IMR-90 (cell line): ENCODE measurements at regions of chr1 and their contacts with region 1.

Region 1: GRCh38 chr1:160315359-160315758 is 27.7 kb downstream of the COPA start:
- DNase-seq: no peak
- ATAC-seq: peak; percentile 24; the same call in 1 of the 2 replicates
- H3K4me3 ChIP-seq: no peak overlapping the region
- H3K27ac ChIP-seq: peak overlapping the region; percentile 7; the same call in 1 of the 2 replicates
- H3K4me1 ChIP-seq: peaks cover 5% of the 10 kb centered on the region; the same call in 1 of the 2 replicates
- H3K27me3 ChIP-seq: no peaks in the 10 kb centered on the region
- CTCF ChIP-seq: no peak
- POLR2A ChIP-seq: no peak
- RAD21 ChIP-seq: no peak

Region 2: DNA sequence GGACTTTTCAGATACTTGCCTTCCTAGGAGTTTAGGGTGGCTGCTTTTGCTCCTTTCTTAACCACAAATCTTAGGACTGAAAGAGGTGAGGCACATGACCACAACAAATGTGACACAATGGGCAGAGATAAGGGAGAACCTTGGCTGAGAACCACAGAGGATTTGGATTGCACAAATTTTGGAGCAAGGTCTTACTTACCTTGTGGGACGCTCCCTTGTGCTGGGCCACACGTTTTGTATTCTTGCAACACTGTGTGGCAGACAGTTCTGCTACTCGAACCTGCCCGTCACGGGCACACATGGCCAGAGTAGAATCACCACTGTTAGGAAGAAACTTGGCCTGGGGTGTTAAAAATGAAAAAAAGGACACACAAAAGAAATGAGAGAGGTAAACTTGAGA is 77.0 kb before region 1 on chr1:
- CTCF ChIA-PET with region 1: no interaction called
- POLR2A ChIA-PET with region 1: no interaction called
- dilution Hi-C with region 1: no loop called
- in situ Hi-C with region 1: no loop called
- intact Hi-C with region 1: loop called (anchors 5 kb)
- DNase-seq: no peak
- ATAC-seq: no peak
- H3K4me3 ChIP-seq: no peak overlapping the region
- H3K27ac ChIP-seq: no peak overlapping the region
- H3K4me1 ChIP-seq: no peaks in the 10 kb centered on the region
- H3K27me3 ChIP-seq: no peaks in the 10 kb centered on the region
- CTCF ChIP-seq: no peak
- POLR2A ChIP-seq: no peak
- RAD21 ChIP-seq: no peak

Region 3: DNA sequence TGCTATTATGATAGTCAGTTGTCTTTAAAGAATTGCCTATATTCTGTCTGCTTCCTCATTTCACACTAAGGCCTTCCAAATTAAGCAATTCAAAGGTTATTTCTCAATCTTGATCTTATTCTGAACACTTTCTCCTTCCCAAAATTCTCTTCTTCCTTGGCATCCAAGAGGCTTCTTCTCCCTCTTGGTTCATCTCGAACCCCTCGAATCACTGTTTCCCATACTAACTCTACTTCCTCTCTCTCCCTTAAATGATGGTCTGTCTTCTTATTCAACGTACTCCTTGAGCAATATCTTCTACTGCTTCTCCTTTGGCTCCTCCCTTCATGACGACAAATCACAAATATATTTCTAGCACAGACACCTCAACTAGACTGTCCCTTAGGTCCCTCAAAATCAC is 23.2 kb after region 1 on chr1:
- CTCF ChIA-PET with region 1: no interaction called
- POLR2A ChIA-PET with region 1: interaction called, 10 read pairs
- dilution Hi-C with region 1: no loop called
- in situ Hi-C with region 1: no loop called
- intact Hi-C with region 1: no loop called
- DNase-seq: no peak
- ATAC-seq: no peak
- H3K4me3 ChIP-seq: no peak overlapping the region
- H3K27ac ChIP-seq: no peak overlapping the region
- H3K4me1 ChIP-seq: peaks cover 3% of the 10 kb centered on the region
- H3K27me3 ChIP-seq: no peaks in the 10 kb centered on the region
- CTCF ChIP-seq: no peak
- POLR2A ChIP-seq: no peak
- RAD21 ChIP-seq: no peak

Region 4: DNA sequence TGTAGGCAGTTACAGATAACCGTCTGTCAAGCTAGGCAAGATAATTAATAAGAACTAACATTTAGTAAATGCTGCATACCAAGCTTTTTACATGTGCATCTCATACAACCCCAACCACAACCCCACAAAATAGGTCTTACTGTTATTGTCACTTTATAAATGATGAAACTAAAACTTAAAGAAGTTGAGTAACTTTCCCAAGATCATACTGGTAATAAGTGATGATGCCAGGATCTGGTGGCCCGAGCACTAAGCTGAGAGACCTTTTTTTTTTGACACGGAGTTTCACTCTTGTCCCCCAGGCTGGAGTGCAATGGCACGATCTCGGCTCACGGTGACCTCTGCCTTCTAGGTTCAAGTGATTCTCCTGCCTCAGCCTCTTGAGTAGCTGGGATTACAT is 29.6 kb after region 1 on chr1:
- CTCF ChIA-PET with region 1: no interaction called
- POLR2A ChIA-PET with region 1: interaction called, 13 read pairs
- dilution Hi-C with region 1: no loop called
- in situ Hi-C with region 1: no loop called
- intact Hi-C with region 1: no loop called
- DNase-seq: no peak
- ATAC-seq: no peak
- H3K4me3 ChIP-seq: no peak overlapping the region
- H3K27ac ChIP-seq: no peak overlapping the region
- H3K4me1 ChIP-seq: peaks cover 3% of the 10 kb centered on the region
- H3K27me3 ChIP-seq: no peaks in the 10 kb centered on the region
- CTCF ChIP-seq: no peak
- POLR2A ChIP-seq: no peak
- RAD21 ChIP-seq: no peak